Activated CD4-positive, alpha-beta memory T cell treated with anti-CD3 and anti-CD28 coated beads for 36 hours (primary cell): ENCODE measurements at regions of chr4 and their contacts with region 1.

Region 1: DNA sequence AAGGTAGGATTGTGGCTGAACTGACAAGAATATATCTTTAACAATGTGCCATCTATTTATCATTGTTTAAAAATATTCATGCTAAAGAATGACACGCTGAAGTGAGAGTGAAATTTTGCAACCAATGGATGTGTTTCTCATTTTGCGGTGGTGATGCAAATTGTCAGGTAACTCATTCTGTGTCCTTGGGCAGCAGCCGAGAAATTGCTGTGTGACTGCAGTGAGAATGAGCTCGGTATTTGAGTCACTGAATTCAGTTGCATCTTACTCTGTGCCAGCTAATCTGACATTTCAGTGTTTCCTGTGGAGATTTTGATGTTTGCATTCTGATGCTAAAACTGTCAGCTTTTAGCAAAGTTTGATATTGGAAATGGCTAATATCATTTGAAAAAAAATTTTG is 28.1 kb downstream of the MCUB start:
- DNase-seq: peak; percentile 81
- H3K4me3 Mint-ChIP-seq: no peak overlapping the region
- H3K27ac Mint-ChIP-seq: peak overlapping the region; percentile 58
- H3K4me1 Mint-ChIP-seq: peaks cover 64% of the 10 kb centered on the region
- H3K27me3 Mint-ChIP-seq: no peaks in the 10 kb centered on the region

Region 2: GRCh38 chr4:109332926-109333464 is 255.2 kb before region 1 on chr4:
- CTCF ChIA-PET with region 1: no interaction called
- POLR2A ChIA-PET with region 1: no interaction called
- intact Hi-C with region 1: no loop called
- DNase-seq: peak; percentile 38
- H3K4me3 Mint-ChIP-seq: no peak overlapping the region
- H3K27ac Mint-ChIP-seq: no peak overlapping the region
- H3K4me1 Mint-ChIP-seq: no peaks in the 10 kb centered on the region
- H3K27me3 Mint-ChIP-seq: no peaks in the 10 kb centered on the region

Region 3: DNA sequence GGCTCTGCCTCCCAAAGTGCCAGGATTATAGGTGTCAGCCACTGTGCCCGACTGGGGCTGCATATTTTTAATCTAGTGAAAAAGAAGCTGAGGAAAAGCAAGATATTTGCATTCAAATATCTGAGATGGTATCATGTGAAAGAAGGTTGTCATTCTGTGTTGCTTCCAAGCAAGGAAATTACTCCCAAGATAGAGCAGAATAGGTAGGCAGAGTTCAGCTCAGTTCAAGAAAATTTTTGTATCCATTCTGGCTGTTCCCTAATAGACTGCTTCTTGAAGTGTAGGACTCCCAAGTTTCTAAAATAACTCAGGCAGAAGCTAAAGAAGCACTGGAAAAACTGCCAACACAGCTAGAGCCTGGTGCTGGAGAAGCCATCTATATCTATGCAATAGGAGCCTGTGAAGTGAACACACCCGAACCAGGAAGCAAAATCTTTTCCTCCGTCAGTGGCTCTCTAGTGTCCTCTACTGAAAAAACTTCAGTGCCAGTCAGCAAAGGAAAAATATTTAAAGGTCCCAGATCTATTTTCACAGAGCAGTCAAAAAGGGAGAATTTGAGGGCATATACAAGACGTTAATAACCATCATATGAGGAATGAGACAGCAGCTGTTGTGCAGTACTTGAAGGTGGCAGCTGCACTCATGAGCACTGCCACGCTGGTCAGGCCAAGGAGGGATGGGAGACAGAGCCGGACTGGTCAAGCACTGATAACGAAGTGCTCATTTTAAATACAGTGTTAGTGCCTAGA is 13.9 kb before region 1 on chr4:
- CTCF ChIA-PET with region 1: no interaction called
- POLR2A ChIA-PET with region 1: no interaction called
- intact Hi-C with region 1: loop called (anchors 2 kb)
- DNase-seq: no peak
- H3K4me3 Mint-ChIP-seq: peak overlapping the region; percentile 7
- H3K27ac Mint-ChIP-seq: no peak overlapping the region
- H3K4me1 Mint-ChIP-seq: peaks cover 66% of the 10 kb centered on the region
- H3K27me3 Mint-ChIP-seq: no peaks in the 10 kb centered on the region

Region 4: GRCh38 chr4:109629775-109630174 is 41.6 kb after region 1 on chr4:
- CTCF ChIA-PET with region 1: no interaction called
- POLR2A ChIA-PET with region 1: no interaction called
- intact Hi-C with region 1: no loop called
- DNase-seq: no peak
- H3K4me3 Mint-ChIP-seq: no peak overlapping the region
- H3K27ac Mint-ChIP-seq: no peak overlapping the region
- H3K4me1 Mint-ChIP-seq: peaks cover 38% of the 10 kb centered on the region
- H3K27me3 Mint-ChIP-seq: no peaks in the 10 kb centered on the region